Cardiac septum (tissue), 1 donor: ENCODE measurements at regions of chr17 and their contacts with region 1.

Region 1: DNA sequence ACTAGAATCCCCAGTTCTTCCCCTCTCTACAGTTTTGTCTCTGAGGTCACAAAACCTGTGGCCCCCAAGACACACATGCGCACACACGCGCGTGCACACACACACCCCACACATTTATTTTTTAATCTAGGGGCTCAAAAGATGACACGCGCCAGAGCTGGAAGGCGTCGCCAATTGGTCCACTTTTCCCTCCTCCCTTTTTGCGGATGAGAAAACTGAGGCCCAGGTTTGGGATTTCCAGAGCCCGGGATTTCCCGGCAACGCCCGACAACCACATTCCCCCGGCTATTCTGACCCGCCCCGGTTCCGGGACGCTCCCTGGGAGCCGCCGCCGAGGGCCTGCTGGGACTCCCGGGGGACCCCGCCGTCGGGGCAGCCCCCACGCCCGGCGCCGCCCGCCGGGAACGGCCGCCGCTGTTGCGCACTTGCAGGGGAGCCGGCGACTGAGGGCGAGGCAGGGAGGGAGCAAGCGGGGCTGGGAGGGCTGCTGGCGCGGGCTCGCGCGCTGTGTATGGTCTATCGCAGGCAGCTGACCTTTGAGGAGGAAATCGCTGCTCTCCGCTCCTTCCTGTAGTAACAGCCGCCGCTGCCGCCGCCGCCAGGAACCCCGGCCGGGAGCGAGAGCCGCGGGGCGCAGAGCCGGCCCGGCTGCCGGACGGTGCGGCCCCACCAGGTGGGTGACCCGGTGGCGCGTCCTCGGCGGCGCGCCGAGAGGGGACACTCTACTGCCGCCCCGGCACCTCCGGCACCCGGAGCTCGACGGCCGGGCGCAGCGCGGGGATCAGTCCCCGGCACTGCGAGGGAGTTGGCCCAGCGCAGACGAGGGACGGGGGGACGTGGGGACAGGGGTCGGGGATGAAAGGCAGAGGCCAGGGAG is at the start of gene STAT5A:
- DNase-seq: peak; percentile 95
- total RNA-seq, gene STAT5A: 12.1 TPM

Region 2: GRCh38 chr17:42248351-42249179 is 39.6 kb before region 1 on chr17:
- intact Hi-C with region 1: loop called (anchors 5 kb)
- DNase-seq: peak; percentile 91

Region 3: DNA sequence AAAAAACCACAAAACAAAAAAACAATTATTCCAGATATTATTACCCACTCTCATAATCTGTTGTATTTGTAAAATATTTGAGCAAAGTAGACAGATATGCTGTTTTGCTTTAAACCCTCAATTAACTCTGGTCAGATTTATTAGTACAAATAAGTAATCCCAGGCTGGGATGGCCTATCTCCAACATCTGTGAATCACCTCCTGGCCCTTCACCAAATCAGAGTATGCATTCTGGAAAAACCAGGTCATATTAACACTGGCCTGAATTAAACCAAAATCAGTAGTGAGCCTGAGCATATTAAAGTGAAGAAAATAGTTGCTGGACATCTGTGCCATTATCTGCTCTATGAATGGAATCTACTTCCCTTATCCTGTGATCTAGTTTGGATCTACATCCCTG is 59.0 kb after region 1 on chr17:
- intact Hi-C with region 1: no loop called
- DNase-seq: no peak